CD8-positive, alpha-beta T cell (primary cell): ENCODE measurements at regions of chr13 and their contacts with region 1.

Region 1: DNA sequence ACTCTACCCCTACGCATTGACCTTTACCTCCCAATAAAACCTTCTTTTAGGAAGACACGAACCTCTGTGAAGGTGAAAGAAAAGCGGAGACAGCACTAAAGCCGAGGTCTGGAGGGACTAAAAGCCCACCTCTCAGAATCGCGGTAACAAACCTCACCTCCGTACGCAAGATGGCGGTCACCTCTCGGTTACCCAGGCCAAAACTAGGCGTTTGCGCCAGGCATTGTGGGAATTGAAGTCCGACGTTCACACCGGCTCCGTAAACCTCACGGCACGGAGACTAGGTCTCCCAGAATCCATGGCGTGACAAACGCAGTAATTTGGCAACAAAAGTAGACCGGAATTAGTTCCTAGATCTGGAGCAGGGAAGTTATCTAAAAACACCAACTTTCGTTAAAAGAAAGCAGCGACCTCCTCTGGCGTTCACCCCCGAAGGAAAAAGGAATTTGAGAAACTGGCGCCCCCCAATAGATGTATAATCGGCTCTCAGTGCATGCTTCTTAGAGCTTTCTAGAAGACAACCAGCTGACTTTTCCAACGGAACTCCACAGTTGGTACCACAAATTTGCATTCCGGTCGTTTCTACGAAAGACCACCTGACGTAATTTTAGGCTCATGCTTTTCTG is at the start of gene N4BP2L2:
- DNase-seq: peak; percentile 82 to 97 (median 92)
- ATAC-seq: peak; percentile 95
- H3K4me3 ChIP-seq: peak within 1 kb of the TSS; percentile 78 to 91
- H3K4me3 Mint-ChIP-seq: peak within 1 kb of the TSS; percentile 99
- H3K27ac ChIP-seq: peak within 1 kb of the TSS; percentile 93 to 97
- H3K27ac Mint-ChIP-seq: peak within 1 kb of the TSS; percentile 100
- H3K4me1 ChIP-seq: peaks cover 37% of the 10 kb centered on the region
- H3K4me1 Mint-ChIP-seq: peaks cover 38% of the 10 kb centered on the region
- H3K27me3 ChIP-seq: no peaks in the 10 kb centered on the region
- H3K27me3 Mint-ChIP-seq: peaks cover 2% of the 10 kb centered on the region
- CTCF ChIP-seq: no peak
- total RNA-seq, gene N4BP2L2: 141 to 149 TPM

Region 2: GRCh38 chr13:32315238-32316027 is 223.3 kb before region 1 on chr13 and contains the starts of genes BRCA2 and ZAR1L:
- CTCF ChIA-PET with region 1: no interaction called
- POLR2A ChIA-PET with region 1: interaction called, 11 read pairs
- intact Hi-C with region 1: loop called (anchors 1 kb)
- DNase-seq: peak; percentile 73 to 95 (median 88)
- ATAC-seq: peak; percentile 90
- H3K4me3 ChIP-seq: peak within 1 kb of the TSS; percentile 80 to 81
- H3K4me3 Mint-ChIP-seq: peak within 1 kb of the TSS; percentile 93
- H3K27ac ChIP-seq: peak within 1 kb of the TSS; percentile 99
- H3K27ac Mint-ChIP-seq: peak within 1 kb of the TSS; percentile 100
- H3K4me1 ChIP-seq: peaks cover 4% of the 10 kb centered on the region
- H3K4me1 Mint-ChIP-seq: peaks cover 14% of the 10 kb centered on the region
- H3K27me3 ChIP-seq: no peaks in the 10 kb centered on the region
- H3K27me3 Mint-ChIP-seq: no peaks in the 10 kb centered on the region
- CTCF ChIP-seq: no peak
- total RNA-seq, gene BRCA2: 2.6 to 3.6 TPM
- total RNA-seq, gene ZAR1L: not detected

Region 3: DNA sequence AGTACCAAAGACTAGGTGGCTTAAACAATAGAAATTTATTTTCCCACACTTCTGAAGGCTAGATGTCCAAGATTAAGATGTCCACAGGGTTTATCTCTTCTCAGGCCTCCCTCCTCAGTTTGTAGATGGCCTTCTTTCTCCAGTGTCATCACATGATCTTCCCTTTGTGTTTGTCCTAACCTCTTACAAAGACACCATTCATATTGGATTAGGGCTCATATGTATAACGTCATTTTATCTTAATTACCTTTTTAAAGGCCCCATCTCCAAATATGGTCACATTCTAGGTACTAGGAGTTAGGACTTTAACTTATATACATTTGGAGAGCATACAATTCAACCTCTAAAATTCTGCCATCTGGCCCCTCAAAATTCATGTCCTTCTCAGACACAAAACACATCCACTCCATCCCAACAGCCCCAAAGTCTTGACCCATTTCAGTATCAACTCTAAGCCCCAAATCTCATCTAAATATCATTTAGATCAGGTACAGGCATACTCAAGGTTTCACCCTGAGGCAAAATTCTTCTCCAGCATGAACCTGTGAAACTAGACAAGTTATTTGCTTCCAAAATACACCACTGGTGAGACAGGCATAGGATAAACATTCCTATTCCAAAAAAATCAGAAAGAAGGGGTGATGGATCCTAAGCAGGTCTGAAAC is 34.3 kb before region 1 on chr13:
- CTCF ChIA-PET with region 1: no interaction called
- POLR2A ChIA-PET with region 1: interaction called, 7 read pairs
- intact Hi-C with region 1: loop called in 1 of 2 experiments (anchors 5 kb)
- DNase-seq: no peak
- ATAC-seq: no peak
- H3K4me3 ChIP-seq: no peak overlapping the region
- H3K4me3 Mint-ChIP-seq: no peak overlapping the region
- H3K27ac ChIP-seq: no peak overlapping the region
- H3K27ac Mint-ChIP-seq: peak overlapping the region; percentile 68
- H3K4me1 ChIP-seq: no peaks in the 10 kb centered on the region
- H3K4me1 Mint-ChIP-seq: peaks cover 6% of the 10 kb centered on the region
- H3K27me3 ChIP-seq: no peaks in the 10 kb centered on the region
- H3K27me3 Mint-ChIP-seq: no peaks in the 10 kb centered on the region
- CTCF ChIP-seq: no peak

Region 4: DNA sequence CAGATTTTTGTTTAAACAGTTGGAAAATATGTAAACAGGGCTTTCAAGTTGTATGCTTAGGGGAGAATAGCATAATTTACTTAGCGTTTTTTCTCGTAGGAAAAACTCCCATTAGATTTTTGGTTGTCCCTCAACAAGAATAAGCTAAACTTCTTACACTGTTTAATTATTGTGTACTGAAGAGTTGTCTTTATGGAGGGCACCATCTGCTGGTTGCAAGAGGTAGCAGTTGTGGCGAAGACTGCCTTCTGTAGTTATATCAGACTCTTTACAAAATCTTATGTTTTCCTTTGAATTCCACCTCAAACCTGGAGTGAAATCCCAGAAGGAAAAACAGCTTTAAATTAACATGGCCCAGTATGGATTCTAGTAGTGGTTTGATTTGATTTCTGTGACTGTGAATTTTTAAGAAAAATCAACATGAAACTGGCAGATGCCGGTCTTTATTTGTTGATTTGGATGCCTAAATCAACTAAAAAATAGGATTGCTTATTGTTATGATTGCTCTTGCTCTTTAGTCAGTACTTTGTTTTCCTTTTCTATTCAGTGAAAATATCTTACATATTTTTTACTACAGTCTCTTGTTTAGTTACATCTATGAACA is 100.9 kb after region 1 on chr13:
- CTCF ChIA-PET with region 1: interaction called, 3 read pairs
- POLR2A ChIA-PET with region 1: no interaction called
- intact Hi-C with region 1: loop called in 1 of 2 experiments (anchors 2 kb)
- DNase-seq: peak; percentile 10 to 81 (median 56)
- ATAC-seq: peak; percentile 92
- H3K4me3 ChIP-seq: no peak overlapping the region
- H3K4me3 Mint-ChIP-seq: no peak overlapping the region
- H3K27ac ChIP-seq: no peak overlapping the region
- H3K27ac Mint-ChIP-seq: no peak overlapping the region
- H3K4me1 ChIP-seq: no peaks in the 10 kb centered on the region
- H3K4me1 Mint-ChIP-seq: peaks cover 32% of the 10 kb centered on the region
- H3K27me3 ChIP-seq: no peaks in the 10 kb centered on the region
- H3K27me3 Mint-ChIP-seq: no peaks in the 10 kb centered on the region
- CTCF ChIP-seq: peak; percentile 73

Region 5: DNA sequence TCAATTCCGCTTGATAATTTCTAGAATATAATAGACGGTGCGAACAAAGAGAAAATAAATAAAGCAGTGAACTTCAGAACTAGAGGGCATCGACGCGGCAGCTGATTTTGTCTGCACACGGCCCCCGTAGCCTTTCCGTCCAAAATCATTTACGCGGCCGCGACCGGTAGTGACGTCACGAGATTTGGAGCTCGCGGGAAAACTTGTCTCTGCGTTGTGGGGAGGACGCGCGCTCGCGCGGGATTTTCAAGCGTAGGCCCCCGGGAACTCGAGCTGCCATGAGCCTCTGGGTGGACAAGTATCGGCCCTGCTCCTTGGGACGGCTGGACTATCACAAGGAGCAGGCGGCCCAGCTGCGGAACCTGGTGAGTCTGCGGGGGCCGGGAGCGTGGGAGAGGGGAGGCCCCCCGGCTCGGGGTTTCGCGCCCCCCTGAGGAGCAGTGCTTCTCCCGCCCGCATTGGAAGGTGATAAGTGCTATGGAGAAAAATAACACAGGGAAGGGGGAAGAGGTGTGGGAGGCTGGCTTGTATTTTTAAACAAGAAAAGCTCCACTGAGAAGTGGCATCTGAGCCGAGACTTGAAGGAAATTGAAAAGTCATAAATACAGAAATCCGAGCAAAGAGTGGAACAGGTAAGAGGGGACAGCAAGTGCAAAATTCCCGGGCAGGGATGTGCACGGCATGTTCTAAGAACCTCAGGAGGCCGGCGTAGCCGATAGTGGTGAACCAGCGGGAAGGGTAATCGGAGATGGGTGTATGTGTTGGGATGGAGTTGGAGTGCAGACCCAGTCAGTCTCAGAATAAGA is 1279.4 kb after region 1 on chr13 and contains the start of gene RFC3:
- CTCF ChIA-PET with region 1: no interaction called
- POLR2A ChIA-PET with region 1: interaction called, 4 read pairs
- intact Hi-C with region 1: loop called (anchors 5 to 10 kb)
- DNase-seq: peak; percentile 81 to 95 (median 90)
- ATAC-seq: peak; percentile 86
- H3K4me3 ChIP-seq: peak within 1 kb of the TSS; percentile 72 to 74
- H3K4me3 Mint-ChIP-seq: peak within 1 kb of the TSS; percentile 93
- H3K27ac ChIP-seq: peak within 1 kb of the TSS; percentile 63 to 64
- H3K27ac Mint-ChIP-seq: peak within 1 kb of the TSS; percentile 88
- H3K4me1 ChIP-seq: peaks cover 8% of the 10 kb centered on the region
- H3K4me1 Mint-ChIP-seq: peaks cover 16% of the 10 kb centered on the region
- H3K27me3 ChIP-seq: no peaks in the 10 kb centered on the region
- H3K27me3 Mint-ChIP-seq: peaks cover 4% of the 10 kb centered on the region
- CTCF ChIP-seq: no peak
- total RNA-seq, gene RFC3: 5.8 to 6.2 TPM